Posterior vena cava (tissue), 2 donors: ENCODE measurements at regions of chr4 and their contacts with region 1.

Region 1: DNA sequence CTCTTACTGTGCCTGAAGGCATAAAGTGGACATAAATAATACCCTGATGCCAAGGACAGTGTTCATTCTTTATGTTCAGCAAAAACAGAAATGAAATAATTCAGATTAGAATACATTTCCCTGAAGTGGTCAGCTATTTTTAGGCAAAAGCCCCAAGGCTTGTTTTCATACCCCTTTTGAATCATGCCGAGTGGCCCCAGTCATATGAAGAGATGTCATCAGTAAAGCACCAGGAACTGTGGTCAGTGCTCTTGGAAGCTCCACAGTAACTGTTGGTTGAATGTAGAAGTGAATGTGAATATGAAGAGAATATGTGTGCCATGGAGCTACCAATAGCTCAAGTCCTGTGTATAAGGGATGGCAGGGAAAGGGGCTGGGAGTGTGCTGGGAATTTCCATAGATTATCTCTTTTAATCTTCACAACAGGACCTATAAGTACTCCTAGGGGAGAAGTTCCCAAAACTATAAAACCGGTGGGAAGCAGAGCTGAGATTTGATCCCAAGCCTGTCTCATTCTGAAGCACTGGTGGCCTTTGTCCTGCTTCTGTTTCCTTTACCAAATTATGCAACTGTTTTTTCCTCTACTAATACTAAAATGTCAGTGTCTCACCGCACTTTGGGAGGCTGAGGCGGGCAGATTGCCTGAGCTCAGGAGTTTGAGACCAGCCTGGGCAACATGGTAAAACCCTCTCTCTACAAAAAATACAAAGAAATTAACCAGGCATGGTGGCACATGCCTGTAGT is 52.6 kb downstream of the FNIP2 start:
- DNase-seq: no peak

Region 2: GRCh38 chr4:158682066-158682465 is 139.3 kb before region 1 on chr4:
- intact Hi-C with region 1: no loop called
- DNase-seq: no peak

Region 3: GRCh38 chr4:158778156-158778711 is 43.2 kb before region 1 on chr4:
- intact Hi-C with region 1: loop called in 1 of 2 experiments (anchors 10 kb)
- DNase-seq: no peak

Region 4: GRCh38 chr4:158786121-158786601 is 35.2 kb before region 1 on chr4:
- intact Hi-C with region 1: loop called in 1 of 2 experiments (anchors 5 kb)
- DNase-seq: no peak

Region 5: GRCh38 chr4:158860856-158861255 is 39.5 kb after region 1 on chr4:
- intact Hi-C with region 1: no loop called
- DNase-seq: no peak

Region 6: DNA sequence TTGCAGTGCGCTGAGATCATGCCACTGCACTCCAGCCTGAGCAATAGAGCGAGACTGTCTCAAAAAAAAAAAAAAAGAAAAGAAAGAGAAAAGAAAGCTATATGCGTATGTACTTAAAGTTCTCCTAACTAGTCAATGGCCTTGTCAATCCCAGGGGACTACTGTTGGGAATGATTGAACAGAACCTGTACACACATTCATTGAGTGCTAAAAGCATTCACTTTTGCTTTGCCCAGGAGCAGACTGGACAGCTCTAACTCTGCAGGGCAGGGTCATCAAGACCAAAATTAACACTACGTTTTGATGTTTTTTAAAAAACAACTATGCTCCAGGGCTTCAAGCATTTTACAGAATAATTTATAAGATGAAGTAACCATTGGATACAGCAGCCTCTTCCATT is 53.6 kb after region 1 on chr4:
- intact Hi-C with region 1: no loop called
- DNase-seq: no peak